Ovary (tissue), 10 donors: ENCODE measurements at regions of chr15 and their contacts with region 1.

Region 1: DNA sequence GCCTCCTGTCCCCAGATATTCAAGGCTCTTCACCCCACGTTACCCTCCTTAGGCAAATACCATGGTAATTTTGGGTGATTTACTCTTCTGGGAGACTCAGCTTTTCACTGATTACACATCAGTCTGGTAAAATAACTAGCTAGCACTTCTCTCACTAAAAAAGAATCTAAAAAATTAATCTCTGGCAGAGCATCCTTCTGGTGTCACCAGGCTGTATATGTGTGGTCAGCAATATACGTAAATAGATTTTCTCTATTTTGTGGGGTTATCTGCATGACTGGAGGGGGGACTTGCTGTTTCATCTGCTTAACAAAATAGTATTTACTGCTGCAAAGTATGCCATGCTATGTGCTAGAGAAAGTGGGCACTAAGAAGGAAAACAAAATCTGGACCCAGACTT is 45.1 kb downstream of the LRRC28 start:
- DNase-seq: no peak
- H3K4me3 ChIP-seq: no peak overlapping the region
- H3K27ac ChIP-seq: peak overlapping the region in 1 of 2 donors; percentile 63
- H3K4me1 ChIP-seq: peaks cover 10% of the 10 kb centered on the region
- H3K27me3 ChIP-seq: no peaks in the 10 kb centered on the region
- CTCF ChIP-seq: no peak
- EP300 ChIP-seq: no peak
- POLR2A ChIP-seq: no peak

Region 2: DNA sequence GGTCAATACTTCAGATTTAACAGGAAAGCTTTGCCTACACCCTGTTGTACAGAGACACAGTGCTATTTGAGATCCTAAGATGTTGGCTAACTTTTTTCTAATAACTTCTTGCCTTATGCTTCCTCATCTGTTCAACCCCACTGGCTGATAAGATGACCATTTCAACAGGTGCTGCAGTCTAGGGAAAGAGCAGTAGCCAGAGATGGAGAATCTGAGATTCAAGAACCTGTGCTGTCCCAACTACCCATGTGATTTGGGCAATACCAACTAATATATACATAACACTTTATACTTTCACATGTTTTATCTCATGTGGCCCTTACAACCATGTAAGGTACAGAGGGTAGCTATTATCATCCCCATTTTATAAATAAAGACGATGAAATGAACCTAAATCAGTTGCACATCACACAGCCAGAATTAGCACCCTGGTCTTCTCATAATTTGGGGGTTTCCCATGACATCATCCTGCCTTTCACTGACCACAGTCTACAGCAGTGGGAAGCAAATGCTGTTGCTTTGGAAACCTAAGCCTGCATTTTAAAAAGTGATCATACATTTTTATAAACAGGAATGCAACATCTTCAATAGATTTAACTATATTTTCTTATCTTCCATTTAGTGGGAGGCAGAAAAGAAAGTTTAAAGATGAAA is 56.7 kb before region 1 on chr15:
- intact Hi-C with region 1: no loop called
- DNase-seq: no peak
- H3K4me3 ChIP-seq: no peak overlapping the region
- H3K27ac ChIP-seq: no peak overlapping the region
- H3K4me1 ChIP-seq: no peaks in the 10 kb centered on the region
- H3K27me3 ChIP-seq: no peaks in the 10 kb centered on the region
- CTCF ChIP-seq: no peak
- EP300 ChIP-seq: no peak
- POLR2A ChIP-seq: no peak

Region 3: DNA sequence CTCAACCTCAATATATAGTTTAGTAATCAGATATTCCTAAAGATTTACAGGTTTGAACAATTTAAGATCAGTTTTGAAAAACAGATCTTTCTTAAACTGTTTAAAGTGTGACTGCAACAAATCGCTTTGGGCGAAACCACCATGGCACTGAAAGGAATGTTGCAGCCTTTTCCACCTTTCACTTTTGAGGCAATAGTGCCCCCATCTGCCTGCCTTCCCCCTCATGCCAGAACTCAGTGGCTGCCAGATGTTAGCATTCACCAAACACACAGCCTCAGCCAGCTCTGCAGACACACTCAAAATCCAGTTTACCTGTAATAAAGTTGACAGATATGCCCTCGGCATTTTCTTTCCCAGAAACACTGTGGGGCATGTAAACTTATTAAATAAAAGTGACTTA is 433.5 kb after region 1 on chr15:
- intact Hi-C with region 1: loop called in 1 of 4 experiments (anchors 10 kb)
- DNase-seq: peak in 4 of 5 donors; percentile 43 to 50 (median 48)
- H3K4me3 ChIP-seq: no peak overlapping the region
- H3K27ac ChIP-seq: no peak overlapping the region
- H3K4me1 ChIP-seq: peaks cover 4% of the 10 kb centered on the region
- H3K27me3 ChIP-seq: no peaks in the 10 kb centered on the region
- CTCF ChIP-seq: peak in 1 of 3 donors; percentile 9
- EP300 ChIP-seq: no peak
- POLR2A ChIP-seq: no peak